ENCODE measurements at regions of chr1 and their contacts with region 1.

Region 1: GRCh38 chr1:68600049-68600661 is 103.3 kb upstream of the DEPDC1 start:
- DNase-seq: peak; percentile 6
- ATAC-seq: no peak
- H3K4me3 Mint-ChIP-seq: no peak overlapping the region
- H3K27ac Mint-ChIP-seq: no peak overlapping the region
- H3K4me1 Mint-ChIP-seq: no peaks in the 10 kb centered on the region
- H3K27me3 Mint-ChIP-seq: no peaks in the 10 kb centered on the region

Region 2: GRCh38 chr1:69088571-69088970 is 488.4 kb after region 1 on chr1:
- CTCF ChIA-PET with region 1: no interaction called
- POLR2A ChIA-PET with region 1: no interaction called
- intact Hi-C with region 1: no loop called
- DNase-seq: no peak
- ATAC-seq: no peak
- H3K4me3 Mint-ChIP-seq: no peak overlapping the region
- H3K27ac Mint-ChIP-seq: no peak overlapping the region
- H3K4me1 Mint-ChIP-seq: no peaks in the 10 kb centered on the region
- H3K27me3 Mint-ChIP-seq: no peaks in the 10 kb centered on the region

Region 3: DNA sequence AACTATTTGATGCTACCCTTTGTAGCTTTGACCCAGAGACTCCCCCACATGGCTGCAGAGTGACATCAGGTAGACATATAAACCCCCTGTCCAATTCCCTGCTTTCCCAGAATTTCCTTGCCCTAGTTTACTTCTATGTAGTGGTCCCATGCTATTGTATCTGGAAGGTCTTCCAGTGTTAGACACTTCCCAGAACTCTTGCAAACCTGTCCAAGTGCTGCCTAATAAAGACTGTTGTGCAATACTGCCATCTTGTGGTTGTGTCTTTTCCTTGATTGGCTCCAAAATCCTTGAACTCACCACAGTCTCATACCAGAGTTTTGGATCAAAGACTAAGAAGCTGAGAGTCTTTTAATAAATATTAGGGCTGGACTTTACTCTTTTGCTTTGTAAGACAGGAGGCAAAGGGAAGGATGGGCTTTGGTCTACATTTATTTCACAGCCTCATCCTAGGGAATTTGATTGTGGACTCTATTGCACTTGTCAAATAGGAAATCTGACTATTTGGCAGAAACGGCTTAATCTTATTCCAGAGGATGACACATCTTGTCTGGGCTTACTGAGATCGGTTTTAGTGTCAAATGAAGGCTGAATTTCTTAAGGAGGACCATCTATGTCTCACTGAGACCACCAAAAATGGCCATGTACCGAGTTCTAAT is 1137.5 kb after region 1 on chr1:
- CTCF ChIA-PET with region 1: no interaction called
- POLR2A ChIA-PET with region 1: no interaction called
- intact Hi-C with region 1: loop called in 1 of 2 experiments (anchors 2 kb)
- DNase-seq: peak; percentile 9
- ATAC-seq: no peak
- H3K4me3 Mint-ChIP-seq: no peak overlapping the region
- H3K27ac Mint-ChIP-seq: no peak overlapping the region
- H3K4me1 Mint-ChIP-seq: no peaks in the 10 kb centered on the region
- H3K27me3 Mint-ChIP-seq: no peaks in the 10 kb centered on the region

Measured in activated CD4-positive, alpha-beta T cell treated with anti-CD3 and anti-CD28 coated beads for 36 hours (primary cell).